ENCODE measurements at regions of chr21 and their contacts with region 1.

Region 1: DNA sequence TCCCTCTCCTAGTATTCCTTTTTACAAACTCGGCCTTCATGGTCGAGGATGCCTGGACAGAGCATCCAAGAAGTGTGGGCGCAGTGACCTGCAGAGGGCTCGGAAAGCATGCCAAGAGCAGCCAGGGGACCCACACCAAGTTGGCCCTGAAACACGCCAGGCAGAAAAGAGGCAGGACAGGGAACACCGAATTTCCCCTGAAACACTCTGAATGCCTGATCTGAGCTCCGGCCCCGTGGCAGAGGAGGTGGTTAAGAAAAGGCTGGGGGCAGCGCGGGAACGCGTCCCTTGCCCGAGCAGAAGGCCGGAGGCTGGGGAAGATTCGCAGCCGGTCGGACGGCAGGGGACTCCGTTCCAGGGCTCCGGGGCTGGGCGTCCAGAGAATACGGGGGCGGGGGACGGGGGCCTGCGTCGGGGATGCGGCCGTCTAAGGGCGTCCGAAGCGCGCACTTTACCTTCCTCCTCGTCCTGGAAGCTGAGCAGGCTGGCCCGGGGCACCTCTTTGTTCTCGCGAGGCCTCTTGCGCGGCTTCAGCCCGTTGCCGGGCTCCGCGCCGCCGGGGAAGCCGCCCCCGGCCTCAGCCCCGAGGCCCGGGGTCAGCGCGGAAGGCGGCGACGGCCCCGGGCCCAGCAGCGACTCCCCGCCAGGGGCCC is 558 bp downstream of the PAXBP1 start:
- DNase-seq: peak in 1 of 2 experiments; percentile 61
- H3K4me3 ChIP-seq: peak overlapping the region; percentile 89 to 99 (median 93)
- H3K27ac ChIP-seq: peak overlapping the region; percentile 89
- H3K4me1 ChIP-seq: no peaks in the 10 kb centered on the region; a peak in 3 of 7 replicates
- H3K27me3 ChIP-seq: no peaks in the 10 kb centered on the region
- CTCF ChIP-seq: no peak
- EP300 ChIP-seq: no peak
- POLR2A ChIP-seq: no peak
- RAD21 ChIP-seq: no peak

Region 2: DNA sequence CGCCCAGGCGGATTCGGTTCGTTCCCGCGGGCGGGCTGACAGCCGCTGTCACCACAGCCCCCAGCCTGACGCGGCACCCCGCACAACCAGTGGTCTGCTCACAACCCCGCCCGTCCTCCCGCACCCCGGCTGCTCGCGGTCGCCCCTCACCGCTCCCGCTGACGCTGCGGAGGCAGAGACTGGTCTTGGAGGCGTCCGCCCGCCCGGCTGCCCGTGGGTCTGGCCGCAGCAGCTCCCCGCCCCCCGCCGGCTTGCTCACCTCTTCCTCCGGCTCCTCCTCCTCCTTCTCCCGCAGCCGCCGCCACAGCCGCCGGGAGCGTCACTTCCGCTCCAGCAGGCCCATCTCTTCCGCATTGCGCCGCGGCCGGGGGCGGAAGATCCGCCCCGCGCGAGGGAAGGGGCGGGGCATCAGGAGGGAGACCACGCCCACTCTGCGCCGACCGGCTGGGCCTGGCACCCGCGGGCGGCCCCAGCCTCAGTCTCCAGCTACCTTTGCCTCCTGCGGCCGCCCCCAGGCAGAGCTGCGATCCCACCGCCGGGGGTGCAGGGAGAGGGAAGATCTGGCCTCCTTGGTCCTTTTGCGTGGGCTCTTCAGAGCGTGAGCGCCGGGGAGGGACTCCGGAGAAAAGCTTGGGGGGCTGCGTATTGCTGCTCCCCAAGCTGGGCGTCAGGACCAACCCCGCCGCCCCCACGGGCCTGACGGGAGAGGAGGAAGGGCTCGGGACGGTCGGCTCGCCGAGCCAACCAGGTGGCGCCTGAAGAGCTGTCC is 43.1 kb before region 1 on chr21 and contains the start of gene SYNJ1:
- CTCF ChIA-PET with region 1: interaction called, 3 read pairs
- POLR2A ChIA-PET with region 1: interaction called, 14 read pairs
- DNase-seq: peak; percentile 70 to 97
- H3K4me3 ChIP-seq: peak within 1 kb of the TSS; percentile 74 to 92 (median 84)
- H3K27ac ChIP-seq: no peak within 1 kb of the TSS; the same call in 1 of the 2 replicates
- H3K4me1 ChIP-seq: peaks cover 0 to 4% (median 1%) of the 10 kb centered on the region in 4 experiments; a peak in 3 of 7 replicates
- H3K27me3 ChIP-seq: no peaks in the 10 kb centered on the region
- CTCF ChIP-seq: no peak
- EP300 ChIP-seq: 0 out of 3 replicates have a peak, but pooled peaks of 1 of the 2 experiments have one; percentile 1
- POLR2A ChIP-seq: peak in 1 of 2 experiments; percentile 54; a peak in 1 of 3 replicates
- RAD21 ChIP-seq: no peak
- total RNA-seq, gene SYNJ1: 4.0 and 4.3 TPM in 2 replicates

Region 3: GRCh38 chr21:32735524-32735923 is 35.5 kb before region 1 on chr21:
- CTCF ChIA-PET with region 1: no interaction called
- POLR2A ChIA-PET with region 1: interaction called, 13 read pairs
- DNase-seq: no peak
- H3K4me3 ChIP-seq: peak overlapping the region in 1 of 4 experiments; percentile 15; a peak in 1 of 8 replicates
- H3K27ac ChIP-seq: no peak overlapping the region
- H3K4me1 ChIP-seq: no peaks in the 10 kb centered on the region
- H3K27me3 ChIP-seq: no peaks in the 10 kb centered on the region
- CTCF ChIP-seq: no peak
- EP300 ChIP-seq: no peak
- POLR2A ChIP-seq: no peak
- RAD21 ChIP-seq: no peak